ENCODE measurements at regions of chr12 and their contacts with region 1.

Region 1: GRCh38 chr12:4567073-4567881 is 5.3 kb downstream of the DYRK4 start:
- DNase-seq: peak; percentile 74
- ATAC-seq: peak; percentile 73
- H3K4me3 ChIP-seq: peak overlapping the region; percentile 10 to 40 (median 30)
- H3K4me3 Mint-ChIP-seq: peak overlapping the region; percentile 82
- H3K27ac ChIP-seq: peak overlapping the region; percentile 91 to 95
- H3K27ac Mint-ChIP-seq: peak overlapping the region; percentile 97
- H3K4me1 ChIP-seq: peaks cover 60 to 70% of the 10 kb centered on the region in 2 donors
- H3K4me1 Mint-ChIP-seq: peaks cover 68% of the 10 kb centered on the region
- H3K27me3 ChIP-seq: no peaks in the 10 kb centered on the region
- H3K27me3 Mint-ChIP-seq: no peaks in the 10 kb centered on the region
- CTCF ChIP-seq: no peak

Region 2: GRCh38 chr12:4320853-4321701 is 246.2 kb before region 1 on chr12 and contains the start of gene TIGAR:
- CTCF ChIA-PET with region 1: no interaction called
- POLR2A ChIA-PET with region 1: no interaction called
- intact Hi-C with region 1: loop called (anchors 1 kb)
- DNase-seq: peak; percentile 95
- ATAC-seq: peak; percentile 97
- H3K4me3 ChIP-seq: peak within 1 kb of the TSS; percentile 69 to 98 (median 90)
- H3K4me3 Mint-ChIP-seq: peak within 1 kb of the TSS; percentile 94
- H3K27ac ChIP-seq: peak within 1 kb of the TSS; percentile 90 to 91
- H3K27ac Mint-ChIP-seq: peak within 1 kb of the TSS; percentile 88
- H3K4me1 ChIP-seq: peaks cover 26 to 30% of the 10 kb centered on the region in 2 donors
- H3K4me1 Mint-ChIP-seq: peaks cover 32% of the 10 kb centered on the region
- H3K27me3 ChIP-seq: no peaks in the 10 kb centered on the region
- H3K27me3 Mint-ChIP-seq: no peaks in the 10 kb centered on the region
- CTCF ChIP-seq: no peak
- total RNA-seq, gene TIGAR: 6.6 and 14.2 TPM in 2 replicates

Region 3: DNA sequence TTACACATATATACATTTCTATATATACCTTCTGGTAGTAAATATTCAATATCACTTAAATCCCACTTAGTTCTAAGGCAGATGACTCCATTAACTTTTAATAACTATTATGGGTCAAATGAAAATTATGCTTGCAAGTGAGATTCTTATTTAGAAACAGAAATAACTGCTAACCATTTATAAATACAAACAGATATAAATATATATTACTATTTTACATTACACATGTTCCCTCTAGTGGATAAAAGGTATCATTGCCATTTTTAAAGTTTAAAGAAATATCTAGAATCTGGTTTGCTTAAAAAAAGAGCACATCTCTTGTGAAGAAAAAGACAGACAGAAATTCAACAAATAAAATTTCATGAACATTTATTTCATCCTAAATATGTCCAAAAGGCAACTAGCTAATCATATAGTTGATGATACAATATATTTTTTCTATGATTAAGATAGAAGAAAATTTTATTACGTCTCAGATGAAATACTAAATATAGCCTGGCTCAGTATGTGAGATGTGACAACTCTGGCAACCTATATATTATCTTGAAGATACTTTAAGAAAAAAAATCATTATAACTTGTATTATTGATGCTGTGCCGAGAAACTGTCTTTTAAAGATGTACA is 40.2 kb before region 1 on chr12:
- CTCF ChIA-PET with region 1: no interaction called
- POLR2A ChIA-PET with region 1: no interaction called
- intact Hi-C with region 1: loop called (anchors 5 kb)
- DNase-seq: peak; percentile 34
- ATAC-seq: no peak
- H3K4me3 ChIP-seq: no peak overlapping the region
- H3K4me3 Mint-ChIP-seq: no peak overlapping the region
- H3K27ac ChIP-seq: no peak overlapping the region
- H3K27ac Mint-ChIP-seq: no peak overlapping the region
- H3K4me1 ChIP-seq: no peaks in the 10 kb centered on the region
- H3K4me1 Mint-ChIP-seq: no peaks in the 10 kb centered on the region
- H3K27me3 ChIP-seq: no peaks in the 10 kb centered on the region
- H3K27me3 Mint-ChIP-seq: no peaks in the 10 kb centered on the region
- CTCF ChIP-seq: peak; percentile 91

Region 4: DNA sequence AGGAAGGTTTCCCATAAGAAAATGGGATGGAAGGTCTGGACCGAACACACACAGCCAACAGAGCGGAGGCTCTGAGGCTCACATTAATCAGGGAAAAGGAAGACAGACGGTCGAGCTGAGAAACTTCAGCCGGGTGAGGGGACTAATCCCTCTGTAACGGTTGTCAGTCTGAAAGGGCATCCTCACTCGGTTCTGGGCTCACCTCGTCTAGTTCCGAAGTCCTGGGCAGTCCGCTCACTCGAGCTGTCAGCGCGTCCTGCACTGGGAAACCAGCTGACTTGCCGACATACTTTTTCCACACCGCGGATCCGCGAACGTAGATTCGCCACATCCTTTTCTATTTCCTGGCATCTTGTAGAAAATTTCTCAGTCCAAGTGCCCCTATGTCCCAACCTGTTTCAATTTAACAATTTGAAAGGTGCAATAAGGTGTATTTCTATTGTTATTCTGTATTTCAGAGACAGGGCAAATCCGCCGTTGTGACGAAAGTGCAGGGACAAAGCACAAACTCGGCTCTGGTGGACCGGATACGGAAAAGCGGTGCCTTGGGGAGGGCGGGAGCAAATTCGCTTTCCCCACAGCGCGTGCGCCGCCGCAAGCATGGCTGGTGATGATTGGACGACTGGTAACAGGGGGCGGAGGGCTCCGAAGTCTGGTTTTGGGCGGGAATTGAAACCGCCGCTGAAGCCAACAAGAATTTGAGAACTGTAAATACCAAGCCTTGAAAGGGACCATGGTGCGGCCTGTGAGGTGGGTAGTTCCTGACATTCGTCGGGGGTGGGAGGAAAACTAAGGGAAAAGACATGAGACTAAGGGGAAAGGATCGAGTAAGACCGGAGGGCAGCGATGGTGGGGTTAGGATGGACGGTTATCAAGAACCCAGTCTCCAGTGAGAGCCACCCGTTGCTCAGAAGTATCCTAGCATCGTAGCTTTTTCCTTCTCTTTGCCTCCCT is 28.8 kb before region 1 on chr12 and contains the start of gene RAD51AP1:
- CTCF ChIA-PET with region 1: interaction called, 5 read pairs
- POLR2A ChIA-PET with region 1: interaction called, 3 read pairs
- intact Hi-C with region 1: loop called (anchors 1 kb)
- DNase-seq: peak; percentile 98
- ATAC-seq: peak; percentile 98
- H3K4me3 ChIP-seq: peak within 1 kb of the TSS; percentile 92 to 100 (median 99)
- H3K4me3 Mint-ChIP-seq: peak within 1 kb of the TSS; percentile 95
- H3K27ac ChIP-seq: peak within 1 kb of the TSS; percentile 94 to 99
- H3K27ac Mint-ChIP-seq: peak within 1 kb of the TSS; percentile 97
- H3K4me1 ChIP-seq: peaks cover 8 to 20% of the 10 kb centered on the region in 2 donors
- H3K4me1 Mint-ChIP-seq: peaks cover 35% of the 10 kb centered on the region
- H3K27me3 ChIP-seq: no peaks in the 10 kb centered on the region
- H3K27me3 Mint-ChIP-seq: no peaks in the 10 kb centered on the region
- CTCF ChIP-seq: no peak
- total RNA-seq, gene RAD51AP1: 3.4 and 4.6 TPM in 2 replicates

Region 5: GRCh38 chr12:4648501-4649357 is 81.5 kb after region 1 on chr12 and contains the starts of genes AKAP3 and NDUFA9:
- CTCF ChIA-PET with region 1: no interaction called
- POLR2A ChIA-PET with region 1: no interaction called
- intact Hi-C with region 1: loop called (anchors 1 kb)
- DNase-seq: peak; percentile 89
- ATAC-seq: peak; percentile 97
- H3K4me3 ChIP-seq: peak within 1 kb of the TSS; percentile 83 to 97 (median 90)
- H3K4me3 Mint-ChIP-seq: peak within 1 kb of the TSS; percentile 91
- H3K27ac ChIP-seq: peak within 1 kb of the TSS; percentile 62 to 83
- H3K27ac Mint-ChIP-seq: peak within 1 kb of the TSS; percentile 86
- H3K4me1 ChIP-seq: peaks cover 20 to 22% of the 10 kb centered on the region in 2 donors
- H3K4me1 Mint-ChIP-seq: peaks cover 52% of the 10 kb centered on the region
- H3K27me3 ChIP-seq: no peaks in the 10 kb centered on the region
- H3K27me3 Mint-ChIP-seq: no peaks in the 10 kb centered on the region
- CTCF ChIP-seq: no peak
- total RNA-seq, gene AKAP3: 3.8 and 4.6 TPM in 2 replicates
- total RNA-seq, gene NDUFA9: 73.3 and 74.2 TPM in 2 replicates

Measured in B cell (primary cell).